Left cardiac atrium (tissue), 4 donors: ENCODE measurements at regions of chr11 and their contacts with region 1.

Region 1: DNA sequence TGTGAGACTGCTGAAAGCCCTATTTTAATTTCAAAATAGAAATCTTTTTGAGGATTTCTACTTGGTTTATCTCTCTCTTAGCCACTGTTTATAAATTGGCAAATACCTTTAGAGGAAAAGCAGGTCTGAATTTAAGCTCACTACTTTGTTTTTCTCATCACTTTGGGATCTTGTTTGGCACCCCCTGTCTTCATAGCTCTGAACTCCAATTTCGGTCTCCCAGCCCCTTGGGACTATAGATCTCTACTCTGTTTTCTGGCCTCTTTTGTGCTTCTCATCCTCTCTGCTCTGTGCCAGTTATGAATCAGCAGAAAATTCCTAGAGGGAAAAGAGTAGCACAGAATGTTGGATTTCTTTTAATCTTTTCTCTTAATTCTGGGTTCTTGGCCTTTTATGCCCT is 118.3 kb downstream of the CYP2R1 start:
- DNase-seq: no peak
- ATAC-seq: no peak

Region 2: DNA sequence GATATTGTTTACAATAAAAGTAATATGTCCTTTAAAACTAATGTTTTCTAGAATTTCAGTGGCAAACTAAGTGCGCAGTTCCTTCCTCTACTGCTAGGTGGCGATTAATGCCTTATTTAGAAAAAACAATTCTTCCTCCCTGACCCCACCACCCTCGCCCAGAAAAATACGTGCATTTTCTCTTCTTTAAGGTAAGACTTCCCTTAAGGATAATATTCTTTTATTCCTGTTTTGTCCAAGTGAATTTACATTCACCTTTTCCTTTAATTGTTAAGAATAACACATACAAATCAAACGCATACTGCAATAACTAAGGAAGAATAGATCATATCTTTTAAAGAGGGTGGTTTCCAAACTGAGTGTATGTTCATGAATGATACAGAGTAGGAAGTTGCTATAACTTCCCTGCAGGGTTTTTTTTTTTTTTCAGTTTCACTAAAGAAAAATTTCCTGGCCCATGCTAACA is 236.6 kb before region 1 on chr11:
- intact Hi-C with region 1: loop called in 1 of 2 experiments (anchors 10 kb)
- DNase-seq: no peak
- ATAC-seq: no peak

Region 3: DNA sequence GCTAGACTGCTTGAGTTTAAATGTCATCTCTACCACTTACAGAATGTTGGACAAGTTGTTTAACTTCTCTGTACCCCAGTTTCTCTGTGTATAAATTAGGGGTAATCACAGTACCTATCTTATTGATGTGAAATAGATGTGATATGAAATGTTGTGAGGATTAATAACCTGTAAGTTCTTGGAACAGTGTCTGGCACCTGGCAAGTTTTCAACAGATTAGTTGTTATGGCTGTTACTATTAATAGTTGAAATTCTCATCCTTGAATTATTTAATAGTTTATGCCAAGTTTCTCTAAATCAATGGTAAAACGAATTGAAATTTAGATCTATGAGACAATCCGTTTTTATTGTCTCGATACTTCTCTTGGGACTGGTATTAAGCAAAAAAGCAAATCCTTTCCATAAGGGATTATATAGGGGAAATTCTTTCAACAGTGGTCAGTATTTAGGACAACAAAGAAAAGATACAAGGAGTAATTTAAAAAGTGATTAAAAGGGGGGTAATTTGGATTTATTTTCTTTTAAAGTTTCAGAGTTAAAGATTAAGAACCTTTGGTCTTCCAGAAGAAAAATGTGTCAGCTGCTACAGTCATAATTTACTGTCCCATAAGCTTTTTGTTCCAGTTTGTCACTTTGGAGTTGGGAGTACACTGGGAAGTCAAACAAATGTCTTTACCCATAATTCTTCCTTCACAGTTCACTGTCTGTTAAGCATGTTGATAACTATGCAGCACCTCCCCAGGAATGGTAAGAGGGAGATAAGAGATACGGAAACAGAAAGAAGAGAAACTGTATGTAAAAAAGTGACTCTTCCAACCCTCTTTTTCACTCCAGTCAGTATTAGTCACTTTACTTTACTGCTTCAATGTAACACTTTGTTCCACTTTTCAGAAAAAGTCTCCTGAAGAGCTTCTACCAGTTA is 117.0 kb before region 1 on chr11:
- intact Hi-C with region 1: loop called in 1 of 2 experiments (anchors 10 kb)
- DNase-seq: no peak
- ATAC-seq: peak; percentile 66 to 74

Region 4: DNA sequence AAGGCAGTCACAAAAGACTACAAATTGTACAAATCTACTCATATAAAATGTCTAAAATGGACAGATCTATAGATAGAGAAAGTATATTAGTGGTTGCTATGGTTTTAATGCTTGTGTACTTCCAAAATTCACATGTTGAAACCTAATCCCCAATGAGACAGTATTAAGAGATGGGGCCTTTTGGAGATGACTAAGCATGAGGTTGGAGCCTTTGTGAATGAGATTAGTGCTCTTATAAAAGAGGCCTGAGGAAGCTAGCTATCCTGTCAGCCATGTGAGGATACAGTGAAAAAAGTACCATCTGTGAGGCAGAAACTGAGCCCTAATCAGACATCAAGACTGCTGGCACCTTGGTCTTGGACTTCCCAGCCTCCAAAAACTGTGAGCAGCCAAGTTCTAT is 35.7 kb after region 1 on chr11:
- intact Hi-C with region 1: no loop called
- DNase-seq: no peak
- ATAC-seq: no peak

Region 5: DNA sequence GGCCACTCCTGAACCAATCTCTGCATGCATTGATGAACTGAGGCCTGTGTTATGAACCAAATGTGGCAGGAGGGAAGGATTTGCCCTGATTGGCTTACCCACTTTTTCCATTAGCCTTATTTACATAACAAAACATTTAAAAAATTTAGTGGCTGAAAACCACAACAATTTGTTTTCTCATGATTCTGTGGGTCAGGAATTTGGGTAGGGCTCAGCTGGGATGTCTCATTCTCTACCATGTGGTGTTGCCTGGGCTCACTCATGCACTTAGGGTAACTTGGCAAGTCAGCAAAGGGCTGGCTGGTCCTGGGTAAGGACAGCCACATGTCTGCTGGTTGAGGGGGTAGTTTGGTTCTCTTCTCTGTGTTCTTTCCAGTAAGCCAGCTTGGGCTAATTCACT is 153.4 kb after region 1 on chr11:
- intact Hi-C with region 1: no loop called
- DNase-seq: no peak
- ATAC-seq: no peak